WTC11 (cell line): ENCODE measurements at regions of chr2 and their contacts with region 1.

Region 1: DNA sequence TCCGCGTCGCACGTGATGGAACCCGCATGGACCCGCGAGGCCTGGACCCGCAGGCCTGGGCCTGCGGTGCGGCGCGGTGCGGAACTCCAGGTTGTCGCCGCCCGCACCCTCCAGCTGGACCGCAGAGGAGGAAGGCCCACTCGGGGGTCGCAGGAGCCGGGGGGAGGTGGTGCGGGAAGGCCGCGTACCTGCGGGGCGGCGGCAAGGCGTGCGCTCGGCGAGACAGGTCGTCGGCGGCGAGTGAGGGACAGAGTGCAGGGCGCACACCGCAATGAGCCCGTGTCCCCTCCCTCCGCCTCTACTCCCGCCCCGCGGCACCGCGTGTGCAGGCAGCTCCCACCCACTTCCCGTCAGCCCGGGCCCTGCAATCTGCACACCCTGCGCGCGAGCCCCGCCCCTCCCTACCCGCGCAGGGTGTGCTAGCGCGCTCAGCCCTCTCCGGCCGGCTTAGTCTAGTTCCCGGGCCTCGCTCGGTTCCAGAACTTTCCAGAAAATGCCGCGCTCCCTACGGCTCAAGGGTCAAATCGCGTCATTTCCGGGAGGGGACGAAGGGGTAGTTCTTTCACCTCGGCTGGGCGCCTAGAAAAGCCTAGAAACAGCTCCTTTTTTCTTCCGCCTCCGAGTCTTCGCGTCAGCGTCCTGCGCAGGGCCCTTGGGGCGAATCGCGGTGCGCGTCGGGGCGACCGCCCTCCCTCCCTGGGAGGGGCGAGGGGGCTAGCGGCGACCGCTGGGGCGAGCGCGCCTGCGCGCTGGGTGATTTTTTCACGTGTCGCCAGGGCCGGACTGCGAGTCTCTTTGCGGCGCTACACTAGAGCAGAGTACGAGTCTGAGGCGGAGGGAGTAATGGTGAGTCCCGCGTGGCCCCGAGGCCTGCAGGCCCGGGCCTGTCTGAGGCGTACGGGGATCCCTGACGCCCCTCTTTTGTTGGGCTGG is at the starts of genes HSPD1 and HSPE1:
- DNase-seq: peak; percentile 96
- ATAC-seq: peak; percentile 89
- H3K4me3 Mint-ChIP-seq: peak within 1 kb of the TSS; percentile 91
- H3K27ac Mint-ChIP-seq: peak within 1 kb of the TSS; percentile 97
- H3K4me1 Mint-ChIP-seq: peaks cover 50% of the 10 kb centered on the region
- H3K27me3 Mint-ChIP-seq: no peaks in the 10 kb centered on the region; the same call in 1 of the 2 replicates
- CTCF ChIP-seq: no peak
- total RNA-seq, gene HSPD1: 995 to 1,024 TPM (median 1,000 TPM) in 3 replicates
- total RNA-seq, gene HSPE1: 333 to 372 TPM (median 366 TPM) in 3 replicates

Region 2: DNA sequence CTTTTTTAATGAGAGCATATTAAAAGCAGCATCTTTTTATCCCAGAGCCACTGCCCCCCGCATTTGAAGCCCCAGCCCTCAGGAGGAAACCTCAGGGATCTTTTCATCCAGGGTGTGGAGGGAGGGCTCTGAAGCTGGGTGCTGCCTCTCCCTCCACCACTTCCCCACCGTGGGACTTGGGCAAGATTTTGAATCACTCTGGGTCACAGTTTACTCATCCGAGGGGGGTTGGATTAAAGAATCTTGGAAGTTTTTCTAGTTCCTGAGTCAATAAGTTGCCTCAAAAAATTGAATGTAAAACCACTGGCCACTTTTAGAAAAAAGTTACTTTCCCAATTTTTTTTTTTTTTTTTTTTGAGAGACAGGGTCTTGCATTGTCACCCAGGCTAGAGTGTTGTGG is 127.3 kb before region 1 on chr2:
- CTCF ChIA-PET with region 1: no interaction called
- POLR2A ChIA-PET with region 1: no interaction called
- DNase-seq: no peak
- ATAC-seq: no peak
- H3K4me3 Mint-ChIP-seq: no peak overlapping the region
- H3K27ac Mint-ChIP-seq: no peak overlapping the region
- H3K4me1 Mint-ChIP-seq: no peaks in the 10 kb centered on the region
- H3K27me3 Mint-ChIP-seq: peaks cover 22% of the 10 kb centered on the region
- CTCF ChIP-seq: no peak

Region 3: GRCh38 chr2:197434541-197435513 is 65.0 kb before region 1 on chr2 and contains the start of gene SF3B1:
- CTCF ChIA-PET with region 1: no interaction called
- POLR2A ChIA-PET with region 1: interaction called, 12 read pairs
- DNase-seq: peak; percentile 96
- ATAC-seq: peak; percentile 89
- H3K4me3 Mint-ChIP-seq: peak within 1 kb of the TSS; percentile 99
- H3K27ac Mint-ChIP-seq: peak within 1 kb of the TSS; percentile 99
- H3K4me1 Mint-ChIP-seq: peaks cover 35% of the 10 kb centered on the region
- H3K27me3 Mint-ChIP-seq: no peaks in the 10 kb centered on the region
- CTCF ChIP-seq: no peak
- total RNA-seq, gene SF3B1: 277 to 321 TPM (median 296 TPM) in 3 replicates

Region 4: GRCh38 chr2:197453161-197453914 is 46.5 kb before region 1 on chr2 and contains the start of gene COQ10B:
- CTCF ChIA-PET with region 1: no interaction called
- POLR2A ChIA-PET with region 1: interaction called, 22 read pairs
- DNase-seq: peak; percentile 99
- ATAC-seq: peak; percentile 94
- H3K4me3 Mint-ChIP-seq: peak within 1 kb of the TSS; percentile 100
- H3K27ac Mint-ChIP-seq: peak within 1 kb of the TSS; percentile 100
- H3K4me1 Mint-ChIP-seq: peaks cover 10% of the 10 kb centered on the region
- H3K27me3 Mint-ChIP-seq: no peaks in the 10 kb centered on the region; the same call in 1 of the 2 replicates
- CTCF ChIP-seq: no peak
- total RNA-seq, gene COQ10B: 17.7 to 21.7 TPM (median 19.9 TPM) in 3 replicates

Region 5: GRCh38 chr2:197480165-197481036 is 19.5 kb before region 1 on chr2:
- CTCF ChIA-PET with region 1: no interaction called
- POLR2A ChIA-PET with region 1: interaction called, 12 read pairs
- DNase-seq: no peak
- ATAC-seq: no peak
- H3K4me3 Mint-ChIP-seq: no peak overlapping the region
- H3K27ac Mint-ChIP-seq: peak overlapping the region; percentile 40; the same call in 1 of the 2 replicates
- H3K4me1 Mint-ChIP-seq: no peaks in the 10 kb centered on the region
- H3K27me3 Mint-ChIP-seq: no peaks in the 10 kb centered on the region
- CTCF ChIP-seq: no peak

Region 6: DNA sequence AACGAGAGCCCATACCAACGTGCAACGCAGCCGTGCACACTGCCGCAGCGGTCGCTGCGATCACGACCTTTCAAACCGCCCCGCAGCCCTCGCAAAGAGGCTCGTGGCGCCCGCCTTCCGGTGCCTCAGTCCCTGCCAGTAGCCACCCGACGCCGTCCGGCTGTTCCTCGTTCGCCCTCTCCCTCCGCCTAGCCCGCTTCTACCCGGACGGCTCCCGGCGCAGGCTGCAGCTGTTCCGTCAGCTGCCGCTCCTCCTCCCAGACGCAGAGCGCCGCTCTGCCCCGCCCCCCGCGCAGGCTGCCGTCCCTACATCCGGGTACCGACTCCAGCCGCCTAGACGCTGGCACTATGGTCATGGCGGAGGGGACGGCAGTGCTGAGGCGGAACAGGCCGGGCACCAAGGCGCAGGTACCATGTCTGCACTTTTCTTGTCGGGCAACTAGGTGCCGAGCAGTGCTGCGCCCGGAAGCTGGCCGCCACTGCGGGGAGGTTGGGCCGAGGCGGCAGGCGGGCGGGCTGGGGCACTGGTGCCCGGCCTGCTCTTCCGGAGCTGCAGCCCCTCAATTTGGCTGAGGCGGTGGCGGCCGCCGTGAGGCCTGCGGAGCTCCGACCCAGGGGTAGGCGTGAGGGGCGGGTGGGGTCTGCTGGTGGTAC is 16.0 kb after region 1 on chr2 and contains the start of gene MOB4:
- CTCF ChIA-PET with region 1: interaction called, 3 read pairs
- POLR2A ChIA-PET with region 1: interaction called, 64 read pairs
- DNase-seq: peak; percentile 95
- ATAC-seq: peak; percentile 95
- H3K4me3 Mint-ChIP-seq: peak within 1 kb of the TSS; percentile 99
- H3K27ac Mint-ChIP-seq: peak within 1 kb of the TSS; percentile 95
- H3K4me1 Mint-ChIP-seq: peaks cover 44% of the 10 kb centered on the region
- H3K27me3 Mint-ChIP-seq: no peaks in the 10 kb centered on the region
- CTCF ChIP-seq: no peak
- total RNA-seq, gene MOB4: 40.8 to 55.7 TPM (median 47.8 TPM) in 3 replicates

Region 7: DNA sequence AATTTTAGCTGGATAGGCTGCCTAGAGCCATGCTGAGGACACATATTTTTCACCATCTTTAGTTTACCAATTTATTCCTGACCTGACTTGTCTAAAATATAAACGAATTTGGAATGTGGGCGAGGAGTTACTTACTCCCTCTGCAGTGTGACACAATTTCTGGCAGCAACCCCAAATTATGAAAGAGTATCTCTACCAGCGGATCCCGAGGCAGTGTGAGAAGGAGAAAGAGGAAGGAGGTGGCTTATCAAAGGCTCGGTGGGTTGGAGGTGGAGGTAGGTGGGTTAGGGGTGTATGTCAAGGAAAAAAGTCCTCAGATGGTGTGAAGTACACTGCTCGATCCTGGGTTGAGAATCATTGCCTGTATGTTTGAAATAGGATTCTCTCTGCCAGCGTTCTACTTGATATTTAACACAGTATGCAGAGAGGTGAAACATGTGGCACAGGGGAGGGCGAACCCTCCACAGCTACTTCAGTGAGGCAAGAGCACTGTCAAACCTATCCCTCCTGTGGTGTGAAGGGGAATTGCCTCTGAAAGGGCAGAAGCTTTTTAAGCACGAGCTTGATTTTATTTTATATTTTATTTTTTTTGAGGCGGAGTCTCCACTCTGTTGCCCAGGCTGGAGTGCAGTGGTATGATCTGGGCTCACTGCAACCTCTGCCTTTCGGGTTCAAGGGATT is 99.6 kb after region 1 on chr2:
- CTCF ChIA-PET with region 1: interaction called, 6 read pairs
- POLR2A ChIA-PET with region 1: interaction called, 12 read pairs
- DNase-seq: peak; percentile 32
- ATAC-seq: peak; percentile 89
- H3K4me3 Mint-ChIP-seq: no peak overlapping the region
- H3K27ac Mint-ChIP-seq: no peak overlapping the region
- H3K4me1 Mint-ChIP-seq: peaks cover 59% of the 10 kb centered on the region
- H3K27me3 Mint-ChIP-seq: no peaks in the 10 kb centered on the region; the same call in 1 of the 2 replicates
- CTCF ChIP-seq: peak; percentile 41; the same call in 1 of the 2 replicates

Region 8: DNA sequence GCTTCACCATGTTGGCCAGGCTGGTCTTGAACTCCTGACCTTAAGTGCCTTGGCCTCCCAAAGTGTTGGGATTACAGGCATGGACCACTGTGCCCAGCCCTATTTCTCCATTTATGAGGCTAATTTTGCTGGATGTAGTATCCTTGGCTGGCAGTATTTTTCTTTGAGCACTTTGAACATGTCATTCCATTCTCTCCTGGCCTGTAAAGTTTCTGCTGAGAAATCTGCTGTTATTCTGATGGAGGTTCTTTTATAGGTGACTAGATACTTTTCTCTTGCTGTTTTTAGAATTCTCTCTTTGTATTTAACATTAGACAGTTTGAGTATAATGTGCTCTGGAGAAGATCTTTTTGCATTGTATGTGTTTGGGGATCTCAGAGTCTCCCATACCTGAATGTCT is 166.4 kb after region 1 on chr2:
- CTCF ChIA-PET with region 1: no interaction called
- POLR2A ChIA-PET with region 1: no interaction called
- DNase-seq: no peak
- ATAC-seq: no peak
- H3K4me3 Mint-ChIP-seq: no peak overlapping the region
- H3K27ac Mint-ChIP-seq: peak overlapping the region; percentile 42; the same call in 1 of the 2 replicates
- H3K4me1 Mint-ChIP-seq: peaks cover 36% of the 10 kb centered on the region
- H3K27me3 Mint-ChIP-seq: peaks cover 6% of the 10 kb centered on the region; the same call in 1 of the 2 replicates
- CTCF ChIP-seq: no peak